ENCODE measurements at regions of chr1 and their contacts with region 1.

Region 1: GRCh38 chr1:110619412-110620249 is 13.5 kb upstream of the KCNA2 start:
- DNase-seq: peak; percentile 94
- ATAC-seq: peak; percentile 89
- H3K4me3 Mint-ChIP-seq: peak overlapping the region; percentile 72
- H3K27ac Mint-ChIP-seq: peak overlapping the region; percentile 60
- H3K4me1 Mint-ChIP-seq: peaks cover 26% of the 10 kb centered on the region
- H3K27me3 Mint-ChIP-seq: no peaks in the 10 kb centered on the region

Region 2: DNA sequence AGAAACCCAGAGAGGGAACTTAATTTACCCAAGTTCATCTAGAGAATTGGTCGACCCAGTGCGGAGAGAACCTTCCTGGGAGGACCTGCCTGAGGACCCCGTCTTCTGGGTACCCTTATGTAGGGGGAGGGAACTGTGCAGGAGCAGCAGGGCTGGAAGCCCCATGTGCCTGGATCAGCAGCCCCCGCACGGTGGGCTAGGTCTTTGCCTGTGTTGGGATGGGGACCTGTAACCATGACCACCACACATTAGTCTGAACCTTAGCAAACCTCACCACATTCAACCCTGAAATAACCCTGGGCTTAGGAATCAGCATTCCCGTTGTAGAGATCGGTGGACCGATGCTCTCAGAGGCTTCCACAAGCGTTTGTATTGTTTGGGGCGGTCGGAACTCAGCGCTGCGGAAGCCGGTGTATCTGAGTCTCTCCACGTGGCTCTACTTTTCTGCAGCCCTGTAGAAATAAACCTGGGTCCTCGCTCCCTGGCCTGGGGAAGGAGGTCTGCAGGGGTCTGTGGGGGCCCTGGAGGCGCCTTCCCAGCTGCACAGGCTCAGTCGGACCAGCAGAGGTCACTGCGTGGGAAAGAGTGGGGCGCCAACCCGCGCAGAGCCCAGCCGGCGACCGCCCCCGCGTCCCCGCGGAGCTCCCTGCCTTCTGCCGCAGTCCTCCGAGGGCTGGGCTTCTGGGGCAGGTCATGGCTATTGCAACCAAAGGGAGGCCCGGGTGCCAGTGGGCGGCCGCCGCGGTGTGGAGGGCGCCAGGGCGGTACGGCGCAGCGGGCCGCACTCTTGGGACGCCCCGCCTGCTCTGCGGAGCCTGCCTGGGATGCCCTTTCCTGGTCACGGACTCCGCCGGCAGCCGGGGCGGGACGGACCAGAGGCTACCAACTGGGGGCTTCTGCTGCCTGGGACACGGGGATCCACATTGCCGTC is 64.5 kb before region 1 on chr1:
- CTCF ChIA-PET with region 1: interaction called, 12 read pairs
- POLR2A ChIA-PET with region 1: no interaction called
- intact Hi-C with region 1: loop called (anchors 1 to 2 kb)
- DNase-seq: peak; percentile 76
- ATAC-seq: peak; percentile 79
- H3K4me3 Mint-ChIP-seq: no peak overlapping the region
- H3K27ac Mint-ChIP-seq: no peak overlapping the region
- H3K4me1 Mint-ChIP-seq: peaks cover 2% of the 10 kb centered on the region
- H3K27me3 Mint-ChIP-seq: peaks cover 45% of the 10 kb centered on the region

Region 3: DNA sequence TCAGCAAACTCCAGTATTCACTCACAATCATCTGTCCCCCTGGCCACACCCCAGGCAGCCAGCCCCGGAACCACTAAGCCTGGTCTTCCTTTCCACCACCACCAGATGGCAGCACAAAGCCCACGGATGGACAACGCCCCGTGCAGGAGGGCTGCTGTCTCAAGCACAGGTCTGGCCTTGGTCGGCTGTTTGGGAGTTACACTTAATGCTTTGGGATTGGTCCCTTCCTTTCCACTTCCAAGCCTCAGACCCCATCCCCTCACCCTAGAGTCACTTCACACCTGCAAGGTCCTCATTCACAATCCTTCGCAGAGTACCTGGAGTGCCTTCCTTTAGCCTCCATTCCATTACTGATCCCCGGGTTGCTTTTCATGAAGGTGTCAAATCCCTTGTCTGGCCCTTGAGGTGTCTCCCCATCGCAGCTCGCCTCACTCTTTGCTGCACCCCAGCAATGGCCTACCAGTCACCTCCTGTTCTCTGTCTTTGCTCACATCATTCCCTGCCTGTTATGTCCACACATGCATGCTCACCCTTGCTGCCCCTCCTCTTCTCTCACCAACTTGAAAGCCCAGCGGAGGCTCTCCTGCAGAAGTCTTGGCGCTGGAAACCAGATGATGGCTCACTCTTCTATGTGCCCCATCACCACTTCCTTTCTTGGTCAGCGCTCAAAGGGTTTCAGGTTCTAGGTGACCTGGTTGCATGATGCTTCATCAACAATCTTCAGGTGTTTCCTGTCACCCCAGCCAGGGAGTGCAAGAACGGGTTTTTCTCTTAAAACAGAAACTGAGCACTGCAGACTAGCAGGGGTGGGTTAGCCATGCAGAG is 11.4 kb after region 1 on chr1:
- CTCF ChIA-PET with region 1: interaction called, 53 read pairs
- POLR2A ChIA-PET with region 1: no interaction called
- intact Hi-C with region 1: no loop called
- DNase-seq: peak; percentile 93
- ATAC-seq: peak; percentile 76
- H3K4me3 Mint-ChIP-seq: no peak overlapping the region
- H3K27ac Mint-ChIP-seq: no peak overlapping the region
- H3K4me1 Mint-ChIP-seq: peaks cover 55% of the 10 kb centered on the region
- H3K27me3 Mint-ChIP-seq: no peaks in the 10 kb centered on the region

Region 4: DNA sequence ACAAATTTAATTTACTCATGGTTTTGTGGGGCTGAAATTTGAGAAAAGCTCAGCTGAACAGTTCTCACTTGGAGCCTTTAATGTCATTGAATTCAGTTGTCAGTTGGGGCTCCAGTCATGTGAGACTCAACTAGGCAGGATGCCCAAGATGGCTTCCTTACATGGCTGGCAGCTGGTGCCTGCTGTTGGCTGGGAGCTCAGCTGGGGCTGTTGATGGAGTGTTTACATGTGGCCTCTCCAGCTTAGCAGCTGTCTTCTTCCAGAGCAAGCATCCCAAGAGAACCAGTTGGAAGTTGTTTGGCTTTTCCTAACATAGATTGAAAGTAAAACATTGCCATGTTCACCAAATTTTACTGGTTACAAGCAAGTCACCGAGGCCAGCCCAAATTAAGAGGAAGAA is 136.9 kb after region 1 on chr1:
- CTCF ChIA-PET with region 1: interaction called, 10 read pairs
- POLR2A ChIA-PET with region 1: no interaction called
- intact Hi-C with region 1: no loop called
- DNase-seq: no peak
- ATAC-seq: no peak
- H3K4me3 Mint-ChIP-seq: no peak overlapping the region
- H3K27ac Mint-ChIP-seq: no peak overlapping the region
- H3K4me1 Mint-ChIP-seq: peaks cover 5% of the 10 kb centered on the region
- H3K27me3 Mint-ChIP-seq: peaks cover 5% of the 10 kb centered on the region

Region 5: DNA sequence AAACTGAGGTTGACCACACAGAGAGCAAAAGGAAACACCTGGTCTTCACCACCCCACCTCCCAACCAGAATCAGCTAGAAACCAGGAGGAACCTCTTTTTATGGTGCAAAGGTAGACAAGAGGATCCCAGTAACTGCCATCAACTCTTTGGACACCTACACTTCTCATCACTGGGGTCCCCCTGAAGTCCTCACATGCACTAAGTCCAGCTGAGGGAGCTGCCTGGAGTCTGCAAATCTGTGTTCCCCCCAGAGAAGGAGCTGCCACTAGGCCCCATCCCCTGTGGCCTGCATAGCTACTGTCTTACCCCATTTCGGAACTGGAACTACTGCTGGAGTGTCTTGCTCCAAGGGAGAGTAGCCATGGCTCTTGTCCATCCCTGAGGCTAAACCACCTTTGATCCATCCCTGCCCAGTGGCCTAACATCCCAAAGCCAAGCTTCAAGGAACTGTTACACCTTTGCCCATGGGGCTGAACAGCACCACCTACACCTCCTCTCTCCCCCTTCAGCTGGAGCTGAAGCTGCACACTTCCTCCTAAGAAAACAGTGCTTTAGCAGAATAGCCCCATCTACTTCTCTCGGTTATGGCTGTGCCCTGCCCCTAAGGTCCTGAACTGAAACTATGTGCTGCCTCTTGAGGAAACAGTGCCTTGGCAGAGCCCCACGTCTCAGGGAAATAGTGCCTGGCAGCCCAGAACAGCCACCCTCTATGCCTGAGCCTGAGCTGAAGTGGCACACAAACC is 167.9 kb after region 1 on chr1:
- CTCF ChIA-PET with region 1: interaction called, 101 read pairs
- POLR2A ChIA-PET with region 1: interaction called, 4 read pairs
- intact Hi-C with region 1: loop called in 1 of 2 experiments (anchors 1 kb)
- DNase-seq: peak; percentile 33
- ATAC-seq: peak; percentile 35
- H3K4me3 Mint-ChIP-seq: peak overlapping the region; percentile 9
- H3K27ac Mint-ChIP-seq: peak overlapping the region; percentile 87
- H3K4me1 Mint-ChIP-seq: peaks cover 60% of the 10 kb centered on the region
- H3K27me3 Mint-ChIP-seq: no peaks in the 10 kb centered on the region

Region 6: GRCh38 chr1:111030590-111030989 is 411.0 kb after region 1 on chr1:
- CTCF ChIA-PET with region 1: interaction called, 3 read pairs
- POLR2A ChIA-PET with region 1: no interaction called
- intact Hi-C with region 1: loop called in 1 of 2 experiments (anchors 2 kb)
- DNase-seq: peak; percentile 69
- ATAC-seq: peak; percentile 80
- H3K4me3 Mint-ChIP-seq: no peak overlapping the region
- H3K27ac Mint-ChIP-seq: no peak overlapping the region
- H3K4me1 Mint-ChIP-seq: no peaks in the 10 kb centered on the region
- H3K27me3 Mint-ChIP-seq: peaks cover 5% of the 10 kb centered on the region